ENCODE measurements at regions of chr1 and their contacts with region 1.

Region 1: DNA sequence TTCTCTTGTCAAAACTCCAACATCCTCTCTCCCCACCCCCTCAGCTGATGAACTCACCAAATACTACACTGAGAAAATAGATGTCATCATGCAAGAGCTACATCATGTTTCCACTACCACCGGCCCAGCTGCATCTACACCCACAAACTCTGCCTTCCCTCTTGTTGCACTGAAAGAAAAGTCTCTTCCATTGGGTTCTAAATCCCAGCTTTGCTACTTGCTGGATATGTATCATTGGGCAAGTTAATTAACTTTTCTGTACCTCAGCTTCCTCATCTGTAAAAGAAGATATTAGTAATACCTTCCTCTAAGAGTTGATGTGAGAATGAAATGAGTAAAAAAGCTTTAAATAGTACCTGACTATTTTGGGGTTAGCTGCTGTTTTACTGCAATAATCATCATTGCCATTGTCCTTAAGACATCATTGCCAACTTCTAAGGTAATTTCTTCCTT is 108.6 kb downstream of the OLFML2B start:
- DNase-seq: no peak

Region 2: DNA sequence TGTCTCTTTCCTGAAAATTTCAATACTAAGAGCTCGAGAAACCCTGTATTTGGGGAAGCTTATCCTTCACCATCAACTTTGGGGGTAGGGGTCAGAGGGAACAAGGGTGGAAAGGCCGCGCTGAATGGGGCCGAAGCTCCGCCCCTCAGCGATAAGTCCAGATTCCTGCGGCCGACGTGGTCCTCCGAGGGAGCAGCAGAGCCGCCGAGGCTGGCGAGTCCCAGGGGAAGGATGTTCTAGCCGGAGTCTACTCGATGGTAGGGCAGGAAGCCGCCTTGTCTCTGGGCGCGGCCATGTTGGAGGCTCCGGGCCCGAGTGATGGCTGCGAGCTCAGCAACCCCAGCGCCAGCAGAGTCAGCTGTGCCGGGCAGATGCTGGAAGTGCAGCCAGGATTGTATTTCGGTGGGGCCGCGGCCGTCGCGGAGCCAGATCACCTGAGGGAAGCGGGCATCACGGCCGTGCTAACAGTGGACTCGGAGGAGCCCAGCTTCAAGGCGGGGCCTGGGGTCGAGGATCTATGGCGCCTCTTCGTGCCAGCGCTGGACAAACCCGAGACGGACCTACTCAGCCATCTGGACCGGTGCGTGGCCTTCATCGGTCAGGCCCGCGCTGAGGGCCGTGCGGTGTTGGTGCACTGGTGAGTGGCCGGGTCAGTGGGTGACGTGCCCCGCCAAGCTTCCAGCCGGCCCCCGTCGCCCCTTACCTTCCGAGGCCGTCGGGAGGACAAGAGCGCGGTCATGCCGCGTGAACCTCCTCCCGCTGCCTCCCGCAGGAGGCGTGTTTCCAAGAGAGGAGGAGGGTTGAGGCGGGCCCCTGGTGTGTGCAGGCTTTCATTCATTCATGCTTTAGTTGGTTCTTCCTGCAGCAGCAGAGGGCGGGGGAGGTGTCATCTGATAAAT is 165.3 kb before region 1 on chr1 and contains the start of gene DUSP12:
- in situ Hi-C with region 1: no loop called
- DNase-seq: peak; percentile 90
- total RNA-seq, gene DUSP12: 20.4 and 36.9 TPM in 2 replicates

Region 3: GRCh38 chr1:161962091-161962887 is 47.2 kb after region 1 on chr1:
- in situ Hi-C with region 1: loop called (anchors 10 kb)
- DNase-seq: peak; percentile 46

Measured in Caki2 (cell line).